ENCODE measurements at regions of chr3 and their contacts with region 1.

Region 1: DNA sequence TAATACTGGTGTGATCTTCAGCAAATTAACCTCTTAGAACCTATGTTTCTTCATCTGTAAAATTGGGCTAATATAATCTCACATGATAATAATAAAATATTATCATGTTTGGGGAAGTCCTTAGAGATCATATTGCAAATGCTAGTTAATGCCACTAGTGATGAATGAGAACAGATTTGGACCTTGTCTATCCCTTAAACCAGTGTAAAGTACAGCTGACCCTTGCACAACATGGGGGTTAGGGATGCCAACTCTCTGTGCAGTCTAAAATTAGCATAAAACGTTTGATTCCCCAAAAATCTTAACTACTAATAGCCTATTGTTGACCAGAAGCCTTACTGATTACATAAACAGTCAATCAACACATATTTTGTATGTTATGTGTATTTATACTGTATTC is 141.2 kb downstream of the B3GALNT1 start:
- DNase-seq: no peak
- ATAC-seq: no peak
- H3K4me3 ChIP-seq: no peak overlapping the region
- H3K27ac ChIP-seq: no peak overlapping the region
- H3K4me1 ChIP-seq: no peaks in the 10 kb centered on the region
- H3K27me3 ChIP-seq: no peaks in the 10 kb centered on the region
- CTCF ChIP-seq: no peak

Region 2: GRCh38 chr3:160180581-160181216 is 783.2 kb before region 1 on chr3:
- CTCF ChIA-PET with region 1: no interaction called
- POLR2A ChIA-PET with region 1: no interaction called
- intact Hi-C with region 1: no loop called
- DNase-seq: peak; percentile 46
- ATAC-seq: peak; percentile 99
- H3K4me3 ChIP-seq: peak overlapping the region; percentile 17; the same call in 1 of the 2 replicates
- H3K27ac ChIP-seq: no peak overlapping the region
- H3K4me1 ChIP-seq: no peaks in the 10 kb centered on the region
- H3K27me3 ChIP-seq: no peaks in the 10 kb centered on the region
- CTCF ChIP-seq: no peak

Region 3: DNA sequence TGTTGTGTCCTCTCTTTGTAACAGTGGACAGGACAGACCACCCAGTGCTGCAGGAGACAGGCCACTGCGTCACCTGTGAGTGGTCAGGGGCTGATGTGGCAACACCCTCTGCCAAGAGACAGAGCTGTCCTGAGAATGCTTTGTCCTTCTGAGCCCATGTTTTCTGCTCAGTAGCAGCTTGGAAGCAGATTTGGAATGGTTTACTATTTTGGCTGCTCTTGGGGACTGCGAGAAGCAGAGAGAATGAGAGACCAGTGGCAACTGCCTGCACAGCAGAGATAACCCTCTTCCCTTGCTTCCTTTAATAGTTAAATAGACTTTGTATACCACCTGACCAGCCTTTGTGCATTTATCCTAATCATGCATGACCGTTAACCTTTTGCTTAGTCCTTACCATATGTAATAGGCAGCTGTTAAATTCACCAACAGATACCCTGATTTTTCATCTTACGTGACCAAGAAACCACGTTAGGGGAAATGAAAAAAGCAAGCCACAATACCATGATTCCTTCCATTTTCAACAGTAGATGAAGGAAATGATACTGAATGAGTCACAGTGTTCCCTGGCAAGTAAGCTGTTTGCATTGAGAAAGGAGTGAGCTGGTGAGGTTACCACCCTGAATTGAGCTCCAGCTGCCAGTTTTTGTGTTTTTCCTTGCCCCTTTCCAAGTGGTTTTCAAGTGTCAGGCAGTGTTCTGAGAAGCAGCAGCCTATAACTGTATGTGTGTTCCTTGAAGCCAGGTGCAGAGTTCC is 105.7 kb after region 1 on chr3:
- CTCF ChIA-PET with region 1: no interaction called
- POLR2A ChIA-PET with region 1: no interaction called
- intact Hi-C with region 1: loop called (anchors 5 kb)
- DNase-seq: peak; percentile 97
- ATAC-seq: peak; percentile 82
- H3K4me3 ChIP-seq: peak overlapping the region; percentile 28
- H3K27ac ChIP-seq: peak overlapping the region; percentile 98
- H3K4me1 ChIP-seq: peaks cover 45% of the 10 kb centered on the region
- H3K27me3 ChIP-seq: no peaks in the 10 kb centered on the region
- CTCF ChIP-seq: no peak

Measured in PC-3 (cell line).